Sciatic nerve (tissue), 2 donors: ENCODE measurements at regions of chr3 and their contacts with region 1.

Region 1: DNA sequence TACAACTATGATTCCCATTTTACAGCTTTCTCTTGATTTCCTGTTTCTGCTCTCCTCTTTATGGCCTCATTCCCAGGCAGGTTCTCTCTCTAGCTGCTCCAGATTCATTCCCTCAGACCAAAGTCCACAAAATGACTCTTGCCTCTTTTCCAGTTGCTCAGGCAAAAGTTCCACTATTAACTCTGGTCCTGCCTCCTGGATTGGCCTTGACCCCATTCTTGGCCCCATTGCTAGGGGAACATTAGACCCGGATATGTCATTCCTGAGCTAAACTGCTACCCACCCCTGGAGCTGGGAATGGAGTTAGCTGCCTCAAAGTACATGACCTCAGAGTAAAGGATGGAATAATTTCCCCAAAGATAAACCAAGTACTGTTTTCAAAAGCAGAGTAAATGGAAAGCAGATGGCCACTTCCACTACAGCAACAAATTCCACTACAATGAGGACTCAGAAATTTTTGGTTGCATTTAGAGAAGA is 73.0 kb upstream of the GAP43 start:
- DNase-seq: peak; percentile 76
- ATAC-seq: peak; percentile 99

Region 2: DNA sequence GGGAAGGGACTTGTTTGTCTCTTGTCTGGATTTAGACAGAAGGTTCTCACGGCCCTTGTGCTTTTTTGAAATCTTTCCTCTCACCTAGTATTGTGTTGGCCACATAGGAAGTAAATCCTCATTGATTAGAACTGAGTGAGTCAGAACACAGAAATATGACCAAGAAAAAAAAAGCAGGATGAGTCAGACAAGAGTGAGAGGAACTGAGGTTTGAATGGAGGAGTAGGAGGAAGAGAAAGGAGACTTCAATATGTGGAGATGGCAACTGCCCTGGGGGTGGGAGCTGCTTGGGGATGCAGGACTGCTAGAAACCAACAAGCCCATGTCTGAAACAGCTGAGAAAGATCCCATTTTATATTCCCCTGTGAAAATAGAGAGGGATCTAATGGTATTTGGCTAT is 209.1 kb before region 1 on chr3:
- intact Hi-C with region 1: loop called (anchors 2 kb)
- DNase-seq: no peak
- ATAC-seq: no peak

Region 3: GRCh38 chr3:115508562-115508961 is 41.8 kb before region 1 on chr3:
- intact Hi-C with region 1: loop called (anchors 5 kb)
- DNase-seq: no peak
- ATAC-seq: no peak